ENCODE measurements at regions of chr12 and their contacts with region 1.

Region 1: GRCh38 chr12:106885026-106885425 is 70.7 kb upstream of the TMEM263 start:
- DNase-seq: no peak
- ATAC-seq: no peak
- H3K4me3 ChIP-seq: no peak overlapping the region
- H3K27ac ChIP-seq: no peak overlapping the region
- H3K4me1 ChIP-seq: no peaks in the 10 kb centered on the region
- H3K27me3 ChIP-seq: no peaks in the 10 kb centered on the region
- CTCF ChIP-seq: no peak

Region 2: GRCh38 chr12:106871496-106871895 is 13.5 kb before region 1 on chr12:
- CTCF ChIA-PET with region 1: no interaction called
- POLR2A ChIA-PET with region 1: interaction called, 11 read pairs
- in situ Hi-C with region 1: no loop called
- intact Hi-C with region 1: no loop called
- DNase-seq: no peak
- ATAC-seq: no peak
- H3K4me3 ChIP-seq: no peak overlapping the region
- H3K27ac ChIP-seq: no peak overlapping the region
- H3K4me1 ChIP-seq: no peaks in the 10 kb centered on the region
- H3K27me3 ChIP-seq: no peaks in the 10 kb centered on the region
- CTCF ChIP-seq: no peak